OCI-LY7 (cell line): ENCODE measurements at regions of chr3 and their contacts with region 1.

Region 1: DNA sequence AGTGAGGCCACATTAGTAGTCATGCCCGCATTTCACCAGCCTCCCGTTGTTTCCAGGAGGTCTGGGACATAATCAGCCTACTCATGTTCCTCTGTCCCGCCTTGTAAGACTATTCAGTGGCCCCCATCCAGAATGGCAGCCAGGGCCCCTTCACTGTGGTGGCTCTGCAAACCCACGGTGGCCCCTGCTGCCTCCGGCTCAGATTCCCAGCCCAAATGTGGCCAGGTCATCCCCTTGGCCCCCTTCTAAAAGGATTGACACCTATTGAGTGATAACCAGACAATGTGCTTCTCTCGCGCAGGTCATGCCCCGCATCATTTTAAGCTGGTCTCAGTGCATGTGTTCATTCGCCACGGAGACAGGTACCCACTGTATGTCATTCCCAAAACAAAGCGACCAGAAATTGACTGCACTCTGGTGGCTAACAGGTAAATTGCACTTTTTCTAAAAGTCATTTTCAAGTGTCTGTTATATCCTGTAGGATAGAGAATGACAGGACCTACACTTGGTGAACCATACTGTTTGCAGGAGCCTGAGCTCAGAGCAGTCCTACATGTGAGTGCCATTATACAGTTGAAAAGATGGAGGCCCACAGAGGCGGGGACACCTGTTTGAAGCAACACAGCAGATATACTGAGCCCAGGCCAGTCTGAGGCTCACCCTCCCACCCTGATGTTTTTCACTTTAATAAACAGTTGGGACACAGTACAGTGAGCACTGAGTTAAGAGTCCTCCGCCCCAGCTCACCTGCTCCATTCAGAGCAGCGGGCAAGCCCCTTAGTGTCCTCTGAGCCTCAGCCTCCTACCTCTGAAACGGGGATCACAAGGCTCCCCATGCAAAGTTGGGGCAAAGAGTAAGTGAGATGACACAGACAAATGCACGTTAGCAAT is 47.7 kb downstream of the PXYLP1 start:
- DNase-seq: peak; percentile 29
- H3K4me3 ChIP-seq: no peak overlapping the region
- H3K27ac ChIP-seq: no peak overlapping the region
- H3K4me1 ChIP-seq: no peaks in the 10 kb centered on the region
- CTCF ChIP-seq: peak; percentile 76

Region 2: DNA sequence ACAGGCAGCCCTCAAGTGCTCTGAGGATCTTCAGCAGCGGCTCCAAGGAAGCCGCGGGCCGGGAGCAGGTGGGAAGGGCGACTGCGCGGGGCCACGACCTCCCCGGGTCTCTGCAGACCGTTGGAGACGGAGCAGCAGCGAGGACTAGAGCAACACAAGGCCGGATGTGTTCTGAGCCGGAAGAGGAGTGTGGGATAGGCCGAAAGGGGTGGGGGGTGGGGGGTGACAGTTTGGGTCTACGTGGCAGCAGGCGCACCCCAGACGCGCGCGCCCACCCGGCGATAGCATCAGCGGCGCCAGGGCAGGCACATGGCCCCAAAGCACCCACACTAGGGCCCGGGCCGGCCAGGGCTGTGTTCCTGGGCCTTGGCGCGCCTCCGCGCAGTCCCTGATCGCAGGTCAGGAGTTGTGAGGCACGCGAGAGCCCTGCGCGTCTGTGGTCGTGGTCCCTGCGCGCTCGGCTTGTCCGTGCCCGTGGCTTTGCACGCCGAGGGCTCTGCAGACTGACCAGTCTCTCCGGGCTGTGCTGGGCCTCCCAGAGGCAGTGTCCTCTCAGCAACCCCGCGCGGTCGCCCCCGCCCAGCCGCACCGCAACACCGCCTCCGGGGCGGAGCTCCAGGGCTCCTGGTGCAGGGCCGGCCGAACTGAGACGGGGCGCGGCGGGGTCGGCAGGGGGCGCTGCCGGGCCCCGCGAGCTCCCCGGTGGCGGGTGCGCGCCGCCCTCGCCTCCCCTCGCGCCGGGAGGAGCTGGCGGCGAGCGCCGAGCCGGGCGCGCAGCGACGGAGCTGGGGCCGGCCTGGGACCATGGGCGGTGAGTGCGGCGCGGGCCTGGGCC is 48.0 kb before region 1 on chr3 and contains the start of gene PXYLP1:
- CTCF ChIA-PET with region 1: interaction called, 8 read pairs
- POLR2A ChIA-PET with region 1: no interaction called
- intact Hi-C with region 1: loop called (anchors 5 kb)
- DNase-seq: peak; percentile 85
- H3K4me3 ChIP-seq: peak within 1 kb of the TSS; percentile 73
- H3K27ac ChIP-seq: peak within 1 kb of the TSS; percentile 25
- H3K4me1 ChIP-seq: peaks cover 7% of the 10 kb centered on the region
- CTCF ChIP-seq: peak; percentile 65
- total RNA-seq, gene PXYLP1: 1.9 and 3.6 TPM in 2 replicates